ENCODE measurements at regions of chr1 and their contacts with region 1.

Region 1: DNA sequence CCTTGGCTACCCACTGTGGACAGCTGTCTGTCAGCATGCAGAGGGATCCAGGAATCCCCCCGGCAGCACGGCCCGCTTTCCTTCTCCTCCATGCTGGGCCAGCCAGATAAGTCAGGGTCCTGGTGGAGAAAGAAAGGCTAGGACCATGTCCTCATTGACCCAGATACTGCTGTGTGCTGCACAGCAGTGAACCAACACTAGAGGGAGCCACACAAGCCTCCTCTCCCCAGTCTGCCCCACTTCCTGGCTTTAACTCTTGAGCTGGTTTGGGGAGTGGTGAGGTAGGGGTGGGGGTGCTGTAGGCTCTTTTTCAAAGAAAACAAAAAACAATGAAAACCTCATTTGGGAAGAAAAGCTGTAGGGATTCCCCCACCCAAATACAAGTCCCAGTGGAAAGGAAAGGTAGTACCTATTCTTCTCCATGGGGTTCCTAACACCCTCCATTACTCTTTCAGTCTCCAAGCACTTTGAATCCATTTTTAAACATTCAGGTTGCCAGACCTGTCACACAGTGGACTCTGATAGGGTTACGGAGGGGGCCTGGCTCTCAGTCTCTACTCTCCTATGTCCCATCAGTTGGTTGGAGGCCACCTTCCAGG is 84.9 kb upstream of the CD1D start:
- DNase-seq: peak; percentile 51
- ATAC-seq: peak; percentile 90
- H3K4me3 Mint-ChIP-seq: no peak overlapping the region
- H3K27ac Mint-ChIP-seq: no peak overlapping the region
- H3K4me1 Mint-ChIP-seq: no peaks in the 10 kb centered on the region
- H3K27me3 Mint-ChIP-seq: no peaks in the 10 kb centered on the region

Region 2: DNA sequence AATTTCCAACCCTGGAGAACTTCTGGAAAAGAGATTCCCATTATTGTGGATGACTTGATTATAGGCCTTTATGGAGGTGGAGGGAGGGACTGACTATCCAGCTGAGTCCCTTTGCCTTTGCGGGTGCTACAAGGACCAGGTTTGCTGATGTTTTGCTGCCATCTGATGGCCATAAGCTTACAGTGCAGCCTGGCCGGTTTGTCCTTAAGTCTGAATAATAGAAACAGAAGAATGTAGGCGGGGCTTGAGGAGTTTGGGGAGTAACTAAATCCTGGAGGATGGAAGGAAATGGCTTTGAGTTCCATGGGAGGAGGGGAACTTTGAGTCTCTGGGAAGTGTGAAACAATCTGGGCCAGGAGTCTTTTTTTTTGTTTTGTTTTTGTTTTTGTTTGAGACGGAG is 29.2 kb after region 1 on chr1:
- CTCF ChIA-PET with region 1: interaction called, 297 read pairs
- POLR2A ChIA-PET with region 1: no interaction called
- DNase-seq: peak; percentile 82
- ATAC-seq: peak; percentile 90
- H3K4me3 Mint-ChIP-seq: no peak overlapping the region
- H3K27ac Mint-ChIP-seq: no peak overlapping the region
- H3K4me1 Mint-ChIP-seq: peaks cover 11% of the 10 kb centered on the region
- H3K27me3 Mint-ChIP-seq: peaks cover 25% of the 10 kb centered on the region

Measured in activated CD8-positive, alpha-beta T cell treated with anti-CD3 and anti-CD28 coated beads, Interleukin-2, amount 10 ng/mL, durations not matched to agents 7 days and 5 days (primary cell).